Gastrocnemius medialis (tissue), 4 donors: ENCODE measurements at regions of chr17 and their contacts with region 1.

Region 1: DNA sequence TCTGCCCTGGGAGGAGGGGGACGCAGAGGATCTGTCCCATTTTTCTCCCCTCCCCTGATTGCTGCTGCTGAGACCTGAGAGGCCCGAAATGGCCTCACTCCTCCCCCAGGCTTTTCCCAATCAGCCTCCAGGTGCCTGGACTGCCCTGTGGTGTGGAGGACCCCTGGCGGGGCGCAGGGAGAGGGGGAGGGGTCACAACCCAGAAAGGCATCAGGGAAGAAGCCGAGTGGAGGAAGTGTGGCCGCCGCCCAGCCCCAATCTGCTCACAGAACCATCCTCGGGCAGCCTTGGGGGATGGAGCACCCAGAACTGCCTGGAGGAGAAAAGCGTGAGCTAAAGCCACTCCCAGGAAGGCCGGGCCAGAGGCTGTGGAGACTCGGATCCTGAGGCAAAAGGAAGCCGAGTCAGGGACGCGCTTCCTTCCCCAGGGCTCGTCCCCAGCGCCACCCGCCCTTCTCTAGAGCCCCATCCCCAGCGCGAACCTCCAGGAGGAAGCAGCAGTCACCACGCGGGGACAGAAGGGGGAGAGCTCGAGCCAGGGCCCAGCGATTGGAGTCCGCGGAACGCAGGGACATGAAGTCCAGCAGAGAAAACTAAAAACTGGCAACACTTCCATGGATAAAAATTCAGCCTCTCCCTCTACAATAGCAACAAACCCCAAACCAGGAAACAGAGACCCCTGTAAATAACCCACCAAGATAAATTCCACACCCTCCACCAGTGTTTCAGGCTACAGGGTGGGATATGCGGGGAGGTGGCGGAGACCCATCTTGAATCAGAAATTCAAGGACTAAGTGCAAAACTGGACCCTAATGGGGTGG is 116.3 kb upstream of the METRNL start:
- DNase-seq: peak; percentile 50 to 59
- ATAC-seq: peak; percentile 44 to 69
- H3K4me3 ChIP-seq: no peak overlapping the region
- H3K27ac ChIP-seq: peak overlapping the region in 2 of 4 donors; percentile 1 to 45
- H3K4me1 ChIP-seq: peaks cover 0 to 4% of the 10 kb centered on the region in 2 donors
- H3K27me3 ChIP-seq: no peaks in the 10 kb centered on the region
- CTCF ChIP-seq: peak; percentile 38 to 61 (median 53)
- POLR2A ChIP-seq: no peak

Region 2: GRCh38 chr17:82781894-82782274 is 181.2 kb before region 1 on chr17:
- in situ Hi-C with region 1: no loop called
- intact Hi-C with region 1: loop called (anchors 2 kb)
- DNase-seq: peak; percentile 61 to 86
- ATAC-seq: peak; percentile 94 to 97
- H3K4me3 ChIP-seq: peak overlapping the region in 2 of 4 donors; percentile 7 to 20
- H3K27ac ChIP-seq: peak overlapping the region; percentile 81 to 87 (median 84)
- H3K4me1 ChIP-seq: peaks cover 16 to 19% of the 10 kb centered on the region in 2 donors
- H3K27me3 ChIP-seq: no peaks in the 10 kb centered on the region
- CTCF ChIP-seq: peak; percentile 94 to 99 (median 98)
- POLR2A ChIP-seq: peak in 1 of 2 donors; percentile 41